ENCODE measurements at regions of chr4 and their contacts with region 1.

Region 1: DNA sequence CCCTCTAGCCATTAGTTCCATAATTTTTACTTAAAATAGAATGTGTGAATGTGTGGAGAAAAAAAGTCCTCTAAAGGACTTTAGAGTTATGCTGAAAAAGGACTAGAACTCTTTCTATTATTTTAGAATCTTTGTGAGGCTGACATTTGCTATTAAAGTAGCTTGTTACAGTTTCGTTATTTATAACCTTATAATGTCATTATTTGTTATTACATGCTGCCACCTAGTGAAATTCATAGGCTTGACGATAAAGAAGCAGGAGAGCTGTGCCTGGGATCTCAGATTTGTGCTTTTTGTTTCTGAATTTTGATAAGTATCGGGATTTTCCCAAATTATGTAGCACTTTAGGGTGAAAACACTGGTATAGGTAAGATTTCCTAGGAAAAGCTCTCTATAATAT is 38.5 kb upstream of the TAPT1 start:
- DNase-seq: peak; percentile 67
- ATAC-seq: peak; percentile 64
- H3K4me3 ChIP-seq: no peak overlapping the region
- H3K27ac ChIP-seq: no peak overlapping the region
- H3K4me1 ChIP-seq: peaks cover 13% of the 10 kb centered on the region
- H3K27me3 ChIP-seq: no peaks in the 10 kb centered on the region
- CTCF ChIP-seq: peak; percentile 73

Region 2: GRCh38 chr4:15811703-15812337 is 453.0 kb before region 1 on chr4:
- CTCF ChIA-PET with region 1: no interaction called
- POLR2A ChIA-PET with region 1: interaction called, 18 read pairs
- intact Hi-C with region 1: no loop called
- DNase-seq: peak; percentile 59
- ATAC-seq: no peak
- H3K4me3 ChIP-seq: no peak overlapping the region
- H3K27ac ChIP-seq: no peak overlapping the region
- H3K4me1 ChIP-seq: no peaks in the 10 kb centered on the region
- H3K27me3 ChIP-seq: no peaks in the 10 kb centered on the region
- CTCF ChIP-seq: no peak

Region 3: GRCh38 chr4:15963001-15963451 is 301.8 kb before region 1 on chr4 and contains the start of gene FGFBP2:
- CTCF ChIA-PET with region 1: no interaction called
- POLR2A ChIA-PET with region 1: no interaction called
- intact Hi-C with region 1: loop called (anchors 5 kb)
- DNase-seq: peak; percentile 56
- ATAC-seq: peak; percentile 87
- H3K4me3 ChIP-seq: no peak within 1 kb of the TSS
- H3K27ac ChIP-seq: no peak within 1 kb of the TSS
- H3K4me1 ChIP-seq: no peaks in the 10 kb centered on the region
- H3K27me3 ChIP-seq: no peaks in the 10 kb centered on the region
- CTCF ChIP-seq: peak; percentile 66
- total RNA-seq, gene FGFBP2: not detected in 2 replicates

Region 4: GRCh38 chr4:16026160-16026761 is 238.5 kb before region 1 on chr4:
- CTCF ChIA-PET with region 1: no interaction called
- POLR2A ChIA-PET with region 1: no interaction called
- intact Hi-C with region 1: loop called (anchors 1 kb)
- DNase-seq: peak; percentile 78
- ATAC-seq: peak; percentile 20; the same call in 1 of the 2 replicates
- H3K4me3 ChIP-seq: no peak overlapping the region
- H3K27ac ChIP-seq: no peak overlapping the region
- H3K4me1 ChIP-seq: peaks cover 36% of the 10 kb centered on the region
- H3K27me3 ChIP-seq: no peaks in the 10 kb centered on the region
- CTCF ChIP-seq: peak; percentile 91

Region 5: GRCh38 chr4:16196478-16197393 is 68.1 kb before region 1 on chr4:
- CTCF ChIA-PET with region 1: interaction called, 10 read pairs
- POLR2A ChIA-PET with region 1: interaction called, 3 read pairs
- intact Hi-C with region 1: loop called (anchors 2 kb)
- DNase-seq: peak; percentile 86
- ATAC-seq: peak; percentile 97
- H3K4me3 ChIP-seq: peak overlapping the region; percentile 62
- H3K27ac ChIP-seq: peak overlapping the region; percentile 39; the same call in 1 of the 2 replicates
- H3K4me1 ChIP-seq: peaks cover 8% of the 10 kb centered on the region
- H3K27me3 ChIP-seq: no peaks in the 10 kb centered on the region
- CTCF ChIP-seq: peak; percentile 68

Region 6: DNA sequence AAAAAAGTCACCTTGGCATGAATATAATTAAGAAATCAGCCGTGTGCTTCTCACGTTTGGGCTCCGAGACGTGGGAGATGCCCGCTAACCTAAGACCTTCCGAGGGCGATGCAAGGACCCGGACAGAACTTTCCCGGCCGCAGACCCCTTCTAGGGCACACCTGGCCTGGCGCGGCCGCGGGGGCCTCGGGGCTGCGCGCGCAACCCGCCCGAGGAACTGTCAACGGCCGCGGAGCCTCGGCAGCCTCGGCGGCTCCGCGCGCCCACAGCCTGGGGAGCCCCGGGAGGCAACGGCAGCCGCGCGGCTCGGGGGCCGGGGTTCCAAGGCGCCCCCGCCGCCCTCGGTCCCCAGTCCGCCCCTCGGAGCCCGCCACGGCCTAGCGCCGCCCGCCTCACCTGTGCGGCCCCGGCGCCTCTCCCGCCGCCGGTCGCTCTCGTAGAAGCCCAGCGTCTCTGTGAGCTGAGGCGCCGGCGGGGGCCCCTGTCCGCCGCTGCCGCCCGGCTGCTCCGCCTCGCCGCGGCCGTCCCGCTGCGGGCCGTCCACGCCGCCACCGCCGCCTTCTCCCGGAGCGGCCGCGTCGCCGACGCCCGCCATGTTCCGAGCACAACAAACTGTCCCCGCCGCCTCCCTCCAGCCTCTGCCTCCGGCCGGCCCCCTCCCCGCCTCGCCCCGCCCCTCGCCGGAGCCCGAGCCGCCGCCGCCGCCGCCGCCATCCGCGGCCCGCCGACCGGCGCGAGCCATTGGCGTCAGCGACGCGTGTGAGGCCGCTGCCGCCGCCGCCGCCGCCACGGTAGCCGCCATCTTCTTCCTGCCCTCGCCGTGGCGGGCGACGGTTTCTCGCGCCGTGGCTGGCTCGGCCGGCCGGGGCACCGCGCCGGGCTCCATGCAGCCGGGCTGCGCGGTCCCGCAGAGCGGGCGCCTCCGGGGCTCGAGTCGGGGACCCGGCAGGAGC is 38.7 kb before region 1 on chr4 and contains the start of gene TAPT1:
- CTCF ChIA-PET with region 1: no interaction called
- POLR2A ChIA-PET with region 1: no interaction called
- intact Hi-C with region 1: loop called (anchors 5 kb)
- DNase-seq: peak; percentile 63
- ATAC-seq: peak; percentile 73
- H3K4me3 ChIP-seq: peak within 1 kb of the TSS; percentile 92
- H3K27ac ChIP-seq: peak within 1 kb of the TSS; percentile 34
- H3K4me1 ChIP-seq: peaks cover 18% of the 10 kb centered on the region; the same call in 1 of the 2 replicates
- H3K27me3 ChIP-seq: no peaks in the 10 kb centered on the region
- CTCF ChIP-seq: no peak
- total RNA-seq, gene TAPT1: 6.0 and 8.7 TPM in 2 replicates

Region 7: GRCh38 chr4:16289897-16290554 is 25.2 kb after region 1 on chr4:
- CTCF ChIA-PET with region 1: no interaction called
- POLR2A ChIA-PET with region 1: no interaction called
- intact Hi-C with region 1: no loop called
- DNase-seq: peak; percentile 60
- ATAC-seq: peak; percentile 38; the same call in 1 of the 2 replicates
- H3K4me3 ChIP-seq: no peak overlapping the region
- H3K27ac ChIP-seq: no peak overlapping the region
- H3K4me1 ChIP-seq: no peaks in the 10 kb centered on the region
- H3K27me3 ChIP-seq: no peaks in the 10 kb centered on the region
- CTCF ChIP-seq: peak; percentile 70

Region 8: GRCh38 chr4:17033768-17034181 is 769.0 kb after region 1 on chr4:
- CTCF ChIA-PET with region 1: no interaction called
- POLR2A ChIA-PET with region 1: no interaction called
- intact Hi-C with region 1: no loop called
- DNase-seq: no peak
- ATAC-seq: no peak
- H3K4me3 ChIP-seq: no peak overlapping the region
- H3K27ac ChIP-seq: no peak overlapping the region
- H3K4me1 ChIP-seq: peaks cover 9% of the 10 kb centered on the region; the same call in 1 of the 2 replicates
- H3K27me3 ChIP-seq: peaks cover 13% of the 10 kb centered on the region; the same call in 1 of the 2 replicates
- CTCF ChIP-seq: no peak

Measured in PC-3 (cell line).